ENCODE measurements at regions of chr21 and their contacts with region 1.

Region 1: DNA sequence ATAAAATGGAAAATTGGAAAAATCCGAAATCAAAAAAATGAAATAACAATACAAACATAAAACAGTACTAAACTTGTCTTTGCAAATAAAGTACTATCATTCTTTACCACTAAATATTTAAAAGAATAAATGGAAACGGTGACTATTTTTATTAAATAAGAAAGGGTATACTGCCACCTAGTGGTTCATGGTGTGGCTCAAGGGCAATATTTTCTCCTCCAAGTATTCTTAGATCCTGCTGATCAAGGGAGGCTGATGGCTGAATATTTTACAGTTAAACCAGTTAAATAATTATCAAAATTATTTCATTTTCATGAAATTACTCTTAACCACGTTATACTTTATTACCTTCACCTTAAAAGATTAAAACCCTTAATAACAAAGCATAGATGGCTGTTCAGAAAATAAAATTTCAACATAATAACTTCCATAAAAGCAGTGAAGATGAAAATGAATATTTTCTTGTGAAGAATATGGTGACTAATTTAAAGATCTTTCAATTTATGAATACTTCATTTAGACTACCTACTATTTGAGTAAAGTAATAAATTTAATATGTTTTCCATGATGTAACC is 1793.9 kb downstream of the NCAM2 start:
- DNase-seq: peak; percentile 9
- H3K4me3 ChIP-seq: no peak overlapping the region
- H3K27ac ChIP-seq: no peak overlapping the region
- H3K4me1 ChIP-seq: no peaks in the 10 kb centered on the region
- H3K27me3 ChIP-seq: no peaks in the 10 kb centered on the region
- CTCF ChIP-seq: peak; percentile 22 to 84 (median 56)
- POLR2A ChIP-seq: no peak

Region 2: GRCh38 chr21:20999659-21000058 is 1792.4 kb before region 1 on chr21:
- intact Hi-C with region 1: loop called (anchors 5 kb)
- DNase-seq: no peak
- H3K4me3 ChIP-seq: no peak overlapping the region
- H3K27ac ChIP-seq: no peak overlapping the region
- H3K4me1 ChIP-seq: no peaks in the 10 kb centered on the region
- H3K27me3 ChIP-seq: no peaks in the 10 kb centered on the region
- CTCF ChIP-seq: peak; percentile 29 to 61 (median 52)
- POLR2A ChIP-seq: no peak

Region 3: GRCh38 chr21:21163904-21164303 is 1628.2 kb before region 1 on chr21:
- intact Hi-C with region 1: loop called (anchors 10 kb)
- DNase-seq: peak; percentile 38
- H3K4me3 ChIP-seq: no peak overlapping the region
- H3K27ac ChIP-seq: no peak overlapping the region
- H3K4me1 ChIP-seq: no peaks in the 10 kb centered on the region
- H3K27me3 ChIP-seq: no peaks in the 10 kb centered on the region
- CTCF ChIP-seq: peak in 3 of 4 experiments; percentile 35 to 49 (median 47)
- POLR2A ChIP-seq: no peak

Region 4: GRCh38 chr21:22827422-22827821 is 35.3 kb after region 1 on chr21:
- intact Hi-C with region 1: no loop called
- DNase-seq: no peak
- H3K4me3 ChIP-seq: no peak overlapping the region
- H3K27ac ChIP-seq: no peak overlapping the region
- H3K4me1 ChIP-seq: no peaks in the 10 kb centered on the region
- H3K27me3 ChIP-seq: no peaks in the 10 kb centered on the region
- CTCF ChIP-seq: no peak
- POLR2A ChIP-seq: no peak